Common myeloid progenitor, CD34-positive (primary cell): ENCODE measurements at regions of chr15 and their contacts with region 1.

Region 1: DNA sequence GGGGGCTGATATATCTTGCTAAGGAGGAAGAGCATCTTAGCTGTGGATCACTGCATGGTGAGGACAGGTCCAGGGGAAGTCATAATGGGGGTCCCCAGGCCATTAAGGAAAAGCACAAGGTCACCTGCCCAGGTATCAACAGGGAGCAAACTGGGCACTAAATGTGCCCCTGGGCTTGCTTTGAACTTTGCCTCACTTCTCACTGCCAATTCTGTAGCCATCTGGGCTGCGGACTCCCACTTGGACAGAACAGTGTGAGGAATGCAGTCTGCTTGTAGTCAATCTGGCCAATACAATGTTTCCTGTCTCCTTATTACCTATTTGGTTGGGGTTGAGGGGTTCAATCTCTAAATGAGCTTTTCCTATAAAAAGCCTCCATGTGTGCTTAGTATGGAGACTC is 21.3 kb downstream of the ARRDC4 start:
- DNase-seq: no peak
- H3K4me3 ChIP-seq: no peak overlapping the region
- H3K27ac ChIP-seq: no peak overlapping the region
- H3K4me1 ChIP-seq: peaks cover 12 to 28% (median 19%) of the 10 kb centered on the region in 4 experiments
- H3K27me3 ChIP-seq: no peaks in the 10 kb centered on the region

Region 2: DNA sequence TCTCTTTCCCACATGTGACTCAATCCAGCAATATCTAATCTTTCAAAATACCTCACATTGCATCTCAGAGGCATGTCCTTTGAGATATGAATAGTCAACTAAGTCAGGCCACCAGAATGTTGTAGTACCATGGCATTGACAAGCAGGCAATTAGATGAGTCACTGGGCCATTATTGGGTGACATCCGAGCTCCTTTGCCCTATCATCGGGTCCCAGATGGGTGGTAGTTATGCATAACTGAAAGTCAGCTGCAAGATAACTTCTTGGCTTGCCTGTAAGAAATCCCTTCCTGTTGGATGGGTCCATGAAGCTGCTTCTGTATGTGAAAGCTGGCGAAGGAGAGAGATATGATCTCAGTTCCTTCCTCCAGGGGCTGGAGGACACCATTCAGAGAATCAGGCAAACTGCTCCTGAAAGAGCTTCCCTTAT is 11.6 kb after region 1 on chr15:
- CTCF ChIA-PET with region 1: interaction called, 12 read pairs
- POLR2A ChIA-PET with region 1: no interaction called
- DNase-seq: peak; percentile 50 to 89 (median 79)
- H3K4me3 ChIP-seq: peak overlapping the region in 3 of 7 experiments; percentile 1 to 29 (median 22)
- H3K27ac ChIP-seq: no peak overlapping the region
- H3K4me1 ChIP-seq: peaks cover 0 to 44% (median 32%) of the 10 kb centered on the region in 4 experiments
- H3K27me3 ChIP-seq: no peaks in the 10 kb centered on the region